HEK293T (cell line): ENCODE measurements at regions of chr17 and their contacts with region 1.

Region 1: GRCh38 chr17:27601069-27601975 is 29.7 kb upstream of the LGALS9 start:
- DNase-seq: peak; percentile 58

Region 2: DNA sequence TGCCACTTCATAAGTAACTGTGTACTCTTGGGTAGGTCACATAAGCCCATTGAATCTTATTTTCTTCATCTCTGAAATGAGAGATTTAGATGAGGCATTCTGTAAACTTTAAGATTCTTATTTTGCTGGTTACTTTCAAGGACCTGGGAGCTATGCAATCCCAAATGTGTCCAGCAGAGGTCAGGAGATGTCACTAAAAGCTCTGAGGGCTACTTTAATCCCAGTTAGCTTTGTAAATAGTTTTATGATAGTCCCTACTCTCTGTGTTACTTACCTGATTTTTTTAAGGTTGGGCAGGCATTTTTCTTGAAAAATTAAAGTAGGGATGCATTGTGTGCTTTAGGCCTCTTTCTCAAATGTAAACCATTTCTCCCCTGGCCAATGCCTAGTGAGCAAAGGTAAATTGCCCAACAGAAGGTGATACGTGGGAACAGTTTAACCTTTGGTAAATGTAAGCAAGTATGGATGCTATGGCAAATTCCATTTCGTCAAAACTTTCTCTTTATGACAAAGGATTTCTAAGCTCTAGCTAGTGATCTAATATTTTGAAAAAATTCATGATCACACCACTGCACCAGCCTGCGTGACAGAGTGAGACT is 364.5 kb before region 1 on chr17:
- CTCF ChIA-PET with region 1: interaction called, 20 read pairs
- POLR2A ChIA-PET with region 1: no interaction called
- DNase-seq: peak; percentile 32

Region 3: GRCh38 chr17:27353461-27354050 is 247.8 kb before region 1 on chr17:
- CTCF ChIA-PET with region 1: interaction called, 11 read pairs
- POLR2A ChIA-PET with region 1: interaction called, 4 read pairs
- DNase-seq: peak; percentile 89

Region 4: DNA sequence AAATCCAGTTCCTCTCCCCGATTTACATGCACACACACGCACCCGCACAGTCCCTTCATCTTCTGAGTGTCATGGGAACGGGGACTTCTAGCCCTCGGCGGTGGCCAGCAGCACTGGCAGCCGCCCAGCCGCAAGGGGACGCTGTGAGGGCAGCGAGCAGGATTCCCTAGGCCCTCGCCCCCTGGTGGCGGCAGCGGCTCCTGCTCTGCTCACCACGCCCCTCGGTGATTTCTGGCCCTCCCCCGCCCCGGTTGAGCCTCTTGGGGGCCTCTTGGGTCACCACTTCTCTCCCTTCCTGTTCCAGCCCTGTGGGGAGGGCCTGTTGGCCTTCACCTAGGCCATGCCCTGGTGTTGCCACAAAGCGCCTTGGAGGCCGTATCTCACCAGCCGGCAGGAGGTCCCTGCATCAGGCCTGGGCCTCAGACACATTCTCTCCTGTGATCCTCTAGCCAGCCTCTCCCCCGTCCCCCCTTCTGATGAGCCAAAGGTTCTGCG is 220.3 kb before region 1 on chr17:
- CTCF ChIA-PET with region 1: interaction called, 11 read pairs
- POLR2A ChIA-PET with region 1: no interaction called
- DNase-seq: peak; percentile 77